Mammary epithelial cell (primary cell): ENCODE measurements at regions of chr13 and their contacts with region 1.

Region 1: GRCh38 chr13:112027250-112027649 is 39.7 kb upstream of the SOX1 start:
- DNase-seq: no peak
- H3K4me3 ChIP-seq: no peak overlapping the region
- H3K27ac ChIP-seq: no peak overlapping the region
- H3K4me1 ChIP-seq: no peaks in the 10 kb centered on the region
- H3K27me3 ChIP-seq: no peaks in the 10 kb centered on the region
- CTCF ChIP-seq: no peak

Region 2: GRCh38 chr13:111980146-111980929 is 46.9 kb before region 1 on chr13:
- CTCF ChIA-PET with region 1: no interaction called
- dilution Hi-C with region 1: loop called (anchors 5 kb)
- in situ Hi-C with region 1: no loop called
- intact Hi-C with region 1: no loop called
- DNase-seq: no peak
- H3K4me3 ChIP-seq: no peak overlapping the region
- H3K27ac ChIP-seq: no peak overlapping the region
- H3K4me1 ChIP-seq: no peaks in the 10 kb centered on the region
- H3K27me3 ChIP-seq: no peaks in the 10 kb centered on the region
- CTCF ChIP-seq: no peak

Region 3: DNA sequence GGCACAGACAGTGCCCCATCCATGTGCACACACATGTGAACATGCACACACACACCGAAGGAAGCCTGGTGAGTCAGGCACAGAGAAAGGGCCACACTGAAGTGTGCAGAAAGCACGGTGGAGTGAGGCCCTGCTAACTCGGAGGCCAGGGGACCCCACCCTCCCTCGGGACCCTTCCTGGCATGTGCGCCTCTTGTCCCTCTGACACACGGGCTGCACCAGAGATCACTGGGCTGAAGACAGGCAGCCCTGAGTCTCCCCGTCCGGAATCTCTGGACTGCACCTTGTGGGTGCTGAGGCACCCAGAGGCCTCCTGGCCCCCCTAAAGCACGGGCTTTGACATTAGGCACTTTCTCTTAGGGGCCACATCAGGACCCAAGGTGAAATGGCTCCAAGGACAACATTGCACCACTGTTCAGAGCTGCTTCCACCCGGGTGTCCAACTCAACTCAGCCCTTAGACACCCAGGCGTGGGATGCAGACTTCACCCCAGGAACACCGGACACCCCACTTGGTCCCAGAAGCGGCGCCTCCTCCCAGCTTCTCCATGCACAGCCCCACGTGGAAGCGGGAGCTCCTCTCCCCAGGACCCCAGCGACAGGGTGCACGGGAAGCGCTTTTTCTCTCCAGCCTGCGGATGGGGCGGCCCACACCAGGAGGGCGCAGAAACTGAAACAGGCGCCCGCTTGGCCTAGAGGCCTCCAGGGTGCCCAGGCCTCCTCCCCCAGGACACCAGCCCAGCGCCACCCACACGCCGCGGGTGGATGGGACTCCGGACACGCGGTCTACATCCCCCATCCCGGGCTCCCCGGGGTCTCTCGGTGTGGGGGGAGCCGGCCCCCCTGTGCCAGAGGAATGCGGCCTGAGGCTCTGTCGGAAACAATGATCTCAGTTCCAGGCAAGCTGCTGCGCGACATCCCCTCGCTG is 439.1 kb after region 1 on chr13:
- CTCF ChIA-PET with region 1: no interaction called
- dilution Hi-C with region 1: loop called (anchors 10 kb)
- in situ Hi-C with region 1: no loop called
- intact Hi-C with region 1: no loop called
- DNase-seq: no peak
- H3K4me3 ChIP-seq: no peak overlapping the region
- H3K27ac ChIP-seq: no peak overlapping the region
- H3K4me1 ChIP-seq: no peaks in the 10 kb centered on the region
- H3K27me3 ChIP-seq: no peaks in the 10 kb centered on the region
- CTCF ChIP-seq: no peak